Activated CD4-positive, alpha-beta T cell treated with anti-CD3 and anti-CD28 coated beads for 36 hours (primary cell): ENCODE measurements at regions of chr16 and their contacts with region 1.

Region 1: GRCh38 chr16:30065143-30065850 is at the start of gene ALDOA:
- DNase-seq: peak; percentile 99
- ATAC-seq: peak; percentile 87
- H3K4me3 Mint-ChIP-seq: peak within 1 kb of the TSS; percentile 88
- H3K27ac Mint-ChIP-seq: peak within 1 kb of the TSS; percentile 99
- H3K4me1 Mint-ChIP-seq: peaks cover 31% of the 10 kb centered on the region
- H3K27me3 Mint-ChIP-seq: no peaks in the 10 kb centered on the region
- total RNA-seq, gene ALDOA: 2,482 to 3,644 TPM

Region 2: DNA sequence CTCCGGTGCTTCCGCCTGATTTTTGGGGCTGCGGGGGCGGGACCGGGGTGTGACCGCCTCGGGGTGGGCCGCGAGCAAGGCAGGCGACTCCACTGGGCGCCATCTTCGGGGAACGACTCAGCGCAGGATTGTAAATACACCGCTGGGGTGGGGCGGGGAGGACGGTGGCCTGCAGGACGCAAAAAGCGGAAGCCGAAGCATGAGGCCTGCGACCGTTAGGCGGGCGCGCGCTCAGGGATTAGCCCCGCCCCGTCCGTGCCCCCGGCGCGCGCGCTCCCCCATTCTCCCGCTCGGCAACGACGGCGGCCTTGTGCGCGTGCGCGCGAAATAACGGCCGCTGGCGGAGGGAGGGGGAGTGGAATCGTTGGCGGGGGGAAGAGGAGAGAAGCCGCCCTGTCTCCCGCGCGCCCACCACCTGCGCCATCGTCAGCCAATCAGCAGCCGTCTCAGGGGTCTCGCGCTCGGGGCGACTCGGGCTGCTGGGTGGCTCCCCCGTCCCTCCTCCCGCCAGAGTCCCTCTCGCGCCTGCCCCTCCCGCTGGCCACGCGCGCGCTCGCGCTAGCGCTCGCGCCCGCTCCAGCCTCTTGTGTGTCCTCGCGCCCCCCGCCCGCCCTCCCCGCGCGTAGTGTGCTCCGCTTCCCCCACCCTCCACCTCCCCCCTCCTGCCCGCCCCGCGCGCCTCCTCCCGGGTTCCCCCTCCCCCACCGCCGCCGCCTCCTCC is 259.8 kb before region 1 on chr16:
- CTCF ChIA-PET with region 1: no interaction called
- POLR2A ChIA-PET with region 1: interaction called, 4 read pairs
- intact Hi-C with region 1: loop called in 1 of 2 experiments (anchors 1 kb)
- DNase-seq: peak; percentile 99
- ATAC-seq: peak; percentile 64
- H3K4me3 Mint-ChIP-seq: peak overlapping the region; percentile 99
- H3K27ac Mint-ChIP-seq: peak overlapping the region; percentile 100
- H3K4me1 Mint-ChIP-seq: peaks cover 37% of the 10 kb centered on the region
- H3K27me3 Mint-ChIP-seq: no peaks in the 10 kb centered on the region

Region 3: GRCh38 chr16:29995911-29996772 is 69.2 kb before region 1 on chr16 and contains the start of gene INO80E:
- CTCF ChIA-PET with region 1: no interaction called
- POLR2A ChIA-PET with region 1: interaction called, 3 read pairs
- intact Hi-C with region 1: loop called (anchors 1 to 2 kb)
- DNase-seq: peak; percentile 100
- ATAC-seq: peak; percentile 98
- H3K4me3 Mint-ChIP-seq: peak within 1 kb of the TSS; percentile 96
- H3K27ac Mint-ChIP-seq: peak within 1 kb of the TSS; percentile 98
- H3K4me1 Mint-ChIP-seq: peaks cover 25% of the 10 kb centered on the region
- H3K27me3 Mint-ChIP-seq: no peaks in the 10 kb centered on the region
- total RNA-seq, gene INO80E: 80.1 to 106 TPM

Region 4: DNA sequence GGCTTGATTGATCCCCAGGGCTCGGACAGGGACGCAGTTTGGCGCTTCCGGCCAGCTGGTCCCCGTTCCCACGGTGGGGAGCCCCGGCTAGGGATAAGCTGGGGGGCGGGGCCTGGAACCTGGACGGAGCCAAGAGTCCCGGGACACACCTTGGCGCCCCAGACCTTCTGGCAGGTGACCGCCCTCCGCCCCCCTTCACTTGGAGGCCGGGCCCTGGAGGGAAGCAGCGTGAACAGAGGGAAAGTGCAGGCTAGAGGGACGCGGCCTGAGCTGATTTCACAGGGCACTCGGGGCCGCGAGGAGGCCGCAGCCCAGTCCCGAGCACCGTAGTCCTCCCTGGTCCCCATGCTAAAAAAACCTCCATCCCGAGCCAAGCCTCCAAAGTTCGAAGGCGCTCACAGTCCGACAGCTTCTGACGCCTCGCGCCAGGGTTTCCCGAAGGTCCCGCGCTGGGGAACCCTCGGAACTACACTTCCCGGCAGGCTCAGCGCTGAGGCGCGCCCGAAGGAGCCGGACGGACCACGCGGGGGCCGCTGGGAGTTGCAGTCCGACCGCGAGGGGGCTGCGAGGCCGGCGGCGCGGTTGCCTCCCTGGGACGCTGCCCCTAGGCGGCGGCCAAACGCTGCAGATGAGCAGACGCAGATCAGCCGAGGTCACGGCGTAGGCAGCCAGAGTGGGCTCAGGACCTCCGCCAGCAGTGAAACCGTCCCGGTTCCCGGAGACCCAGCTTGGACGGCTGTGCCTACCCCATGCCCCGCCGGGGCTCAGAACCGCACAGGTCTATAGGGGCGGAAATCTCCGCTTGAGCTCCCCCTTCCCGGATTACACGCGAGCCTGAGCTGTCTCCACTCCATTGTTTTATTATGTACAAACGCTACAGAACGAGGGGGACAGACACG is 26.4 kb after region 1 on chr16 and contains the start of gene TBX6:
- CTCF ChIA-PET with region 1: interaction called, 8 read pairs
- POLR2A ChIA-PET with region 1: interaction called, 8 read pairs
- intact Hi-C with region 1: loop called in 1 of 2 experiments (anchors 1 kb)
- DNase-seq: peak; percentile 97
- ATAC-seq: peak; percentile 83
- H3K4me3 Mint-ChIP-seq: peak within 1 kb of the TSS; percentile 84
- H3K27ac Mint-ChIP-seq: peak within 1 kb of the TSS; percentile 92
- H3K4me1 Mint-ChIP-seq: peaks cover 51% of the 10 kb centered on the region
- H3K27me3 Mint-ChIP-seq: no peaks in the 10 kb centered on the region
- total RNA-seq, gene TBX6: 2.7 to 3.0 TPM

Region 5: GRCh38 chr16:30370444-30371247 is 305.3 kb after region 1 on chr16 and contains the start of gene TBC1D10B:
- CTCF ChIA-PET with region 1: no interaction called
- POLR2A ChIA-PET with region 1: no interaction called
- intact Hi-C with region 1: loop called in 1 of 2 experiments (anchors 1 kb)
- DNase-seq: peak; percentile 99
- ATAC-seq: peak; percentile 88
- H3K4me3 Mint-ChIP-seq: peak within 1 kb of the TSS; percentile 89
- H3K27ac Mint-ChIP-seq: peak within 1 kb of the TSS; percentile 97
- H3K4me1 Mint-ChIP-seq: peaks cover 40% of the 10 kb centered on the region
- H3K27me3 Mint-ChIP-seq: no peaks in the 10 kb centered on the region
- total RNA-seq, gene TBC1D10B: 38.1 to 43.4 TPM

Region 6: GRCh38 chr16:30472328-30472942 is 407.1 kb after region 1 on chr16 and contains the start of gene ITGAL:
- CTCF ChIA-PET with region 1: no interaction called
- POLR2A ChIA-PET with region 1: no interaction called
- intact Hi-C with region 1: loop called in 1 of 2 experiments (anchors 2 kb)
- DNase-seq: peak; percentile 93
- ATAC-seq: peak; percentile 62
- H3K4me3 Mint-ChIP-seq: peak within 1 kb of the TSS; percentile 95
- H3K27ac Mint-ChIP-seq: peak within 1 kb of the TSS; percentile 99
- H3K4me1 Mint-ChIP-seq: peaks cover 63% of the 10 kb centered on the region
- H3K27me3 Mint-ChIP-seq: no peaks in the 10 kb centered on the region
- total RNA-seq, gene ITGAL: 210 to 222 TPM